ENCODE measurements at regions of chr12 and their contacts with region 1.

Region 1: DNA sequence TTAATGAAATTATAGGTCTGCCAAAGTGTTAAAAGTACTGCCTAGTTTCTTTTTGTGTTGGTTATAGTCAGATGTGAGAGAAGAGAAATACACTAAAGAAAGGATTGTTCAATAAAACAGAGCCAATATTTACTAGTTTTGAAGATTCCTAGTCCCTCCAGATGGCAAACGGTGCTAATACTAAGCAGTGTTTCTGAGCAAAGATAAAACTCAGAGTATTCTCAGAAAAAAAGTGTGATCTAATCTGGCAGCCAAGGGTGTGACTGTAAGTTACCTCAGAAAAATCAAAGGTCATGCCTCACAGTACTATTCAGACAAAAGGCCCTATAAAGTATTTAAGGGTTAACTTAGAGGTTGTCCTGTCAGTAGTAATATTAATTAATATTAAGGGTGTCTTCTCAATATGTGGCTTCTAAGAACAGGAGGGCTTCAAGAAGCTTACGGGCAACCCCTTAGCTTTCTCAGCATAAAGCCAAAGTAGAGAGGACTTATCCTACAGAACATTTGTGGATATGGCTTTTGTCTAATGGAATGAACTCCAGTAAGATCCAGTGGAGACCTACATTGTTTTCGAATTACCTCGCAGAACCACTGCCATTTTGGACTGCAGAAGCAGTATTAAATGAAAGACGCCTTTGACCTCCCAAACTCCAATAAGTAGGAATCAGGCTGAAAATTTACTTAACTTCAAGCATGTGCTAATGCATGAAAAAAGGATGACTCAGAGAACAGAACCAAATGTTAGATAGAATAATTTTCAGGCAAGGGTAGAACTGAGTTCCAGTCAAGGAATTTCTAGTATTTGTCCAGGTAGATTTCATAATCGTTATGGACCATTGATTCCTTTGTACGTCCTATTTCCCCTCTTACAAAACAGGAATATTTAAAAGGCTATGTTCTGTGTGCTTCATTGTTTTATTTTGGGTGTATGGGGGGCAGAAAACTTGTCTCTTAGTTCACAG is 46.6 kb downstream of the USP15 start:
- DNase-seq: no peak
- ATAC-seq: no peak
- H3K4me3 ChIP-seq: no peak overlapping the region
- H3K4me3 Mint-ChIP-seq: no peak overlapping the region
- H3K27ac ChIP-seq: no peak overlapping the region
- H3K27ac Mint-ChIP-seq: no peak overlapping the region
- H3K4me1 ChIP-seq: no peaks in the 10 kb centered on the region
- H3K4me1 Mint-ChIP-seq: peaks cover 80% of the 10 kb centered on the region
- H3K27me3 ChIP-seq: no peaks in the 10 kb centered on the region
- H3K27me3 Mint-ChIP-seq: no peaks in the 10 kb centered on the region
- CTCF ChIP-seq: no peak

Region 2: DNA sequence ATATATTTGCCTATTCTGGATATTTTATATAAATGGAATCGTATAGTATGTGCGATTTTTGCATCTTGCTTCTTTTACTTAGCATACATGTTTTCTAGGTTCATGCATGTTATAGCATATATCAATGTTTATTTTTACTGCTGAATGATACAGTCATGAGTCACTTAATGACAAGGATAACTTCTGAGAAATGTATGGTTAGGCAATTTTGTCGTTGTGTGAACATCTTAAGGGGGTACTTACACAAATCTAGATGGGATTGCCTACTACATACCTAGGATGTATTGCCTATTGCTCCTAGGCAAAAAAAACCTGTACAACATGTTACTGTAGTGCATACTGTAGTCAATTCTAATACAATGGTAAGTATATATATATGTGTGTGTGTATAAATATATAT is 37.9 kb before region 1 on chr12:
- CTCF ChIA-PET with region 1: no interaction called
- POLR2A ChIA-PET with region 1: no interaction called
- intact Hi-C with region 1: loop called (anchors 5 kb)
- DNase-seq: no peak
- ATAC-seq: no peak
- H3K4me3 ChIP-seq: no peak overlapping the region
- H3K4me3 Mint-ChIP-seq: peak overlapping the region; percentile 35
- H3K27ac ChIP-seq: no peak overlapping the region
- H3K27ac Mint-ChIP-seq: peak overlapping the region; percentile 18
- H3K4me1 ChIP-seq: peaks cover 12% of the 10 kb centered on the region
- H3K4me1 Mint-ChIP-seq: peaks cover 93% of the 10 kb centered on the region
- H3K27me3 ChIP-seq: no peaks in the 10 kb centered on the region
- H3K27me3 Mint-ChIP-seq: no peaks in the 10 kb centered on the region
- CTCF ChIP-seq: no peak

Measured in CD4-positive, alpha-beta T cell (primary cell).